Panc1 (cell line): ENCODE measurements at regions of chr11 and their contacts with region 1.

Region 1: DNA sequence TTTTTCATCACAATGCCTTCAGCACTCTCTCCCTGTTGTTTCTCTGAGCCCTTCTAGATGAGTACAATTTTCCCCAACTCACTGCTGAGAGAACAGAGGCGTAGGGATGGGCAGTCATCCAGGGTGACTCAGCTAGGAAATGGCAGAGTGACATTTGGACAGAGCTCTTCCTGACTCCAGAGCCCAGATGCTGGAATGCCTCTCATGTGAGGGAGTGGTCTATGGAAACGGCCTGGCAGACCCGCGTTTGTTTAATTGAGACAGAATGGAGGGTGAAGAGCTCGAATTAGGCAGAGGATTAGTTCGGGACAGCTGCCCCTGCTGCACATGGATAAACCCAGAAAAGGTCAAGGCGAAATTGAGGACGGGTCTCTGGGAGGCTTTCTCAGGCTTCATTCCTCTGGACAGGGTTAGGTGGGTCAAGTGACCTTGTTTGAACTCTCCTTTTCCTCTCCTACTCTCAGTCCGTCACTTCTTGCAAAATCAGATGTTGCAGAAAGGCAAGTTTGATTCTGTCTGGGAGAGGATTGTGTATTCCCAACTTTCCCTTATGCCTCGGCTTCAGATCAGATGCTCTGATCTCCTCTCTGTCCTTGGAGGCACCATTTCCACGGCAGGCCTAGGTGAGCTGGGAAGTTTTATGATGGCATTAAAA is 7.6 kb upstream of the LMO2 start:
- DNase-seq: no peak
- ATAC-seq: peak; percentile 66; the same call in 1 of the 2 replicates
- H3K4me3 ChIP-seq: no peak overlapping the region
- H3K27ac ChIP-seq: no peak overlapping the region
- H3K4me1 ChIP-seq: no peaks in the 10 kb centered on the region
- H3K27me3 ChIP-seq: peaks cover 9% of the 10 kb centered on the region; the same call in 1 of the 2 replicates
- CTCF ChIP-seq: no peak

Region 2: GRCh38 chr11:33912405-33913361 is 13.2 kb after region 1 on chr11:
- CTCF ChIA-PET with region 1: no interaction called
- POLR2A ChIA-PET with region 1: no interaction called
- in situ Hi-C with region 1: no loop called
- intact Hi-C with region 1: no loop called
- DNase-seq: no peak
- ATAC-seq: no peak
- H3K4me3 ChIP-seq: no peak overlapping the region
- H3K27ac ChIP-seq: no peak overlapping the region
- H3K4me1 ChIP-seq: no peaks in the 10 kb centered on the region
- H3K27me3 ChIP-seq: peaks cover 4% of the 10 kb centered on the region; the same call in 1 of the 2 replicates
- CTCF ChIP-seq: no peak

Region 3: GRCh38 chr11:34013898-34014571 is 114.5 kb after region 1 on chr11:
- CTCF ChIA-PET with region 1: no interaction called
- POLR2A ChIA-PET with region 1: interaction called, 11 read pairs
- in situ Hi-C with region 1: no loop called
- intact Hi-C with region 1: no loop called
- DNase-seq: no peak
- ATAC-seq: no peak
- H3K4me3 ChIP-seq: no peak overlapping the region
- H3K27ac ChIP-seq: no peak overlapping the region
- H3K4me1 ChIP-seq: no peaks in the 10 kb centered on the region
- H3K27me3 ChIP-seq: no peaks in the 10 kb centered on the region
- CTCF ChIP-seq: no peak